Colonic mucosa (tissue), 4 donors: ENCODE measurements at regions of chr4 and their contacts with region 1.

Region 1: GRCh38 chr4:168710353-168710946 is 213.6 kb downstream of the PALLD start:
- DNase-seq: peak; percentile 32
- H3K4me3 ChIP-seq: no peak overlapping the region
- H3K27ac ChIP-seq: no peak overlapping the region
- H3K4me1 ChIP-seq: no peaks in the 10 kb centered on the region
- H3K27me3 ChIP-seq: no peaks in the 10 kb centered on the region
- CTCF ChIP-seq: peak; percentile 34

Region 2: DNA sequence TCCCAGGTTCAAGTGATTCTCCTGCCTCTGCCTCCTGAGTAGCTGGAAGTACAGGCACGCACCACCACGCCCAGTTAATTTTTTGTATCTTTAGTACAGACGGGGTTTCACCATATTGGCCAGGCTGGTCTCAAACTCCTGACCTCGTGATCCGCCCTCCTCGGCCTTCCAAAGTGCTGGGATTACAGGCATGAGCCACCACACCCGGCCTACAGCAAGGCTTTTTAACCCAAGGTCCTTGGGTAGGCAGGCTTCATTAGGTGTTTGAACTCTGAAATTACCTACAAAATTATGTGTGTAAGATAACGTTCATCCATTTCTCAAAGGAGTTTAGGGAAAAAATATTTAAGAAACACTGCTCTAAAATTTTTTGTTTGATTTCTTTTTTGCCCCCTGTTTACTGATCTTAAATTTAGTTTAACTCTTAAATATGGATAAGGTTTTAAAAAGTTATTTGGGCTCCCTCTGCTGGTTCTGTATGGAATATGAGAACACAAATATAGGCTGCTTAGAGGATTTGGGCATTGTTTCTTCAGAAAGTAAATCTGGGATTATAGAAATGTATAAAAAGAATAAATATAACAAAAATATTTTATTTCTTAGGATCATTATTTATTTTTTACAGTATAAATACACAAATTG is 206.8 kb after region 1 on chr4:
- intact Hi-C with region 1: loop called (anchors 2 kb)
- DNase-seq: no peak
- H3K4me3 ChIP-seq: no peak overlapping the region
- H3K27ac ChIP-seq: no peak overlapping the region
- H3K4me1 ChIP-seq: no peaks in the 10 kb centered on the region
- H3K27me3 ChIP-seq: no peaks in the 10 kb centered on the region
- CTCF ChIP-seq: peak; percentile 38